Gastrocnemius medialis (tissue), 4 donors: ENCODE measurements at regions of chr10 and their contacts with region 1.

Region 1: GRCh38 chr10:102167861-102168260 is 15.7 kb downstream of the NOLC1 start:
- DNase-seq: no peak
- ATAC-seq: no peak
- H3K4me3 ChIP-seq: no peak overlapping the region
- H3K27ac ChIP-seq: no peak overlapping the region
- H3K4me1 ChIP-seq: peaks cover 0 to 7% of the 10 kb centered on the region in 2 donors
- H3K27me3 ChIP-seq: no peaks in the 10 kb centered on the region
- CTCF ChIP-seq: no peak
- POLR2A ChIP-seq: no peak

Region 2: GRCh38 chr10:101867931-101868330 is 299.9 kb before region 1 on chr10:
- in situ Hi-C with region 1: no loop called
- intact Hi-C with region 1: no loop called
- DNase-seq: no peak
- ATAC-seq: no peak
- H3K4me3 ChIP-seq: no peak overlapping the region
- H3K27ac ChIP-seq: no peak overlapping the region
- H3K4me1 ChIP-seq: no peaks in the 10 kb centered on the region
- H3K27me3 ChIP-seq: no peaks in the 10 kb centered on the region
- CTCF ChIP-seq: no peak
- POLR2A ChIP-seq: no peak

Region 3: DNA sequence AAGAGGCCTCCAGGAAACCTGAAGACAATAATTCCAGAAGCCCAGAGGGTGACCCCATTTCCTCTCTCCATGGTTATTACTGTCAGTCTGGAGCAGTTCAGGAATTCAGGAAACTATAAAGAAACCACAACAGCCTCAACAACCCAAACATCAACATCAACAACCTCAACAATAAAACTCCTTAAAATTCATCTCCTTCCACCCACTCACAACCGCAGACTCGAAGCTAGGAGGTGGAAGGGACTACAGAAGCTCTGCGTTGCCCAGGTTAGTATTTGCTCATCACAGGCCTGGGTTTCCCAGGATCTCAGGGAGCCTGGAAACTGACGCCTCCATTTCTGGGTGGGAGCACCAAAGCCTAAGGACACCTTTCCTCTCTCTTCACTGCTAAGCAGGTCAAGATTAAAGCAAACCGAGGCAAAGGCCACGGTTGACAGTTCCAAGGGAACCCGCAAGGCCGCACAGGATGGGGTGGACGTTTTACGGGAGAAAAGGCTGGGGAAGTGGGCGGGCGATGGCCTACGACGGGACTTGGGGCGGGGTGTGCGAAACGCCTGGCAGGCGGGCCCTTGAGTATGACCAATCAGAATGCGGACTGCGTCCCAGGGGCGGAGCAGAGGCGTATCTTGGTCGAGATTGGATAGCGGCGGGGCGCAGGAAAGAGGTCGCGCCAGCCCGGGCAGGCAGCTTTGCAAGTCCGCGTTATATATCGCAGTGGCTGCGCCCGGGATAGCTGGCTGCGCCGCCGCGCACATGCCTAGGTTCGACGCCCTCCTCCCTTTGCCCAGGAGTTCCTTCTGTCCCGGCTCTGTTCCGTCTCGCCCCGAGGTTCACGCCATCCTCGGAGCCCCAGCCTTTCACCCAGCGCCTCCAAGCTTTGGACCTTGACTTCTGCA is 58.0 kb after region 1 on chr10 and contains the start of gene ELOVL3:
- in situ Hi-C with region 1: loop called in 1 of 4 experiments (anchors 10 kb)
- intact Hi-C with region 1: loop called (anchors 2 kb)
- DNase-seq: peak; percentile 89 to 93
- ATAC-seq: peak; percentile 84 to 89
- H3K4me3 ChIP-seq: peak within 1 kb of the TSS; percentile 41 to 55 (median 44)
- H3K27ac ChIP-seq: peak within 1 kb of the TSS; percentile 74 to 82 (median 79)
- H3K4me1 ChIP-seq: peaks cover 23 to 24% of the 10 kb centered on the region in 2 donors
- H3K27me3 ChIP-seq: no peaks in the 10 kb centered on the region
- CTCF ChIP-seq: peak in 1 of 5 experiments; percentile 30
- POLR2A ChIP-seq: peak in 1 of 2 donors; percentile 33
- total RNA-seq, gene ELOVL3: 0.51 TPM in 1 of 4 donors, not detected in the others

Region 4: GRCh38 chr10:102352066-102352715 is 184.3 kb after region 1 on chr10:
- in situ Hi-C with region 1: loop called in 1 of 4 experiments (anchors 5 kb)
- intact Hi-C with region 1: loop called (anchors 2 kb)
- DNase-seq: peak in 1 of 2 donors; percentile 35
- ATAC-seq: peak in 1 of 2 donors; percentile 20
- H3K4me3 ChIP-seq: no peak overlapping the region
- H3K27ac ChIP-seq: no peak overlapping the region
- H3K4me1 ChIP-seq: peaks cover 6 to 7% of the 10 kb centered on the region in 2 donors
- H3K27me3 ChIP-seq: no peaks in the 10 kb centered on the region
- CTCF ChIP-seq: peak; percentile 62 to 92 (median 84)
- POLR2A ChIP-seq: no peak